ENCODE measurements at regions of chr10 and their contacts with region 1.

Region 1: DNA sequence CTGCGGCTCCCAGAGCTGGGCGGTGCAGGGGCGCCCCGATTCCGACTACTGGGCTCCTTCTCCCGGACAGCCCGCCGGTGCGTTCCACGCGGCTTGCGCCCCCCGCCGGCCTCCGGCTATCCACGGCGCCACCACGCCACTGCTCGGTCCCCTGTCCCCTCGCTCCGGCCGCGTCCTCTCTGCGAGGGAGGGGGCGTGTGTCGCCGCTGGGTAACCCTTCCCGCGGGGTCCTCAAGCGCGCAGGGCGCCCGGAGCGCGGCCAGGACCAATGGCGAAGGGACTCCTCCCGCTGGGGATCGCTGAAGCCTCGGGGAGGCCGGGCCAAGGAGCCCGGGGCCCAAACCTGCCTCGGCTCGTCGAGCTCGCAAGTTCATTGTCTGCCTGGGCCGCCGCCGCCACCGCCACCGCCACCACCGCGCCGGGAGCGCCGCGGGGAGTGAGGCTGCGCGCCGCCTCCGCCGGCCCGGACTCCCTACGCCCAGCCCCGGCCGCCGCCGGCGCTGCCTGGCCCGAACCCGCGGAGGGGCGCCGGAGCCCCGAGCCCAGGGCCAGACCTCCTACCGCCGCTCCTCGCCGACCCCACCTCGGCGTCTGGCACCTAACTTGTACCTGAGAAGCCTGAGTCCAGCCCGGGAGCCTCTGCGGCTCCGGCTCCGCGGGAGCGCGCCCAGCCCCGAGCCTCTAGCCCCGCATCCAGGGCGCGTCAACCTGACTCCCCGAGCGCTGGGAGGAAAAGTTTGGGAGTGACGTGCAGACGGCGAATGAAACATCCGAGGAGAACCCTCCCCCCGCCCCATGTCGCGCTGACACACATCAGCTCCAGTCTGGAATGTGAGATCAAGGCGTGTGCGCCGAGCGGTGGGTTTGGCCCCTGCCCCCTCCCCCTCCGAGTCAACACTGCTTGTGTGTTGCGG is at the start of gene CHST15:
- DNase-seq: peak; percentile 12
- H3K4me3 Mint-ChIP-seq: peak within 1 kb of the TSS; percentile 58
- H3K27ac Mint-ChIP-seq: no peak within 1 kb of the TSS
- H3K4me1 Mint-ChIP-seq: peaks cover 2% of the 10 kb centered on the region
- H3K27me3 Mint-ChIP-seq: peaks cover 55% of the 10 kb centered on the region
- total RNA-seq, gene CHST15: 0.47 to 0.50 TPM

Region 2: GRCh38 chr10:124221356-124222317 is 128.5 kb after region 1 on chr10:
- CTCF ChIA-PET with region 1: no interaction called
- intact Hi-C with region 1: loop called (anchors 10 kb)
- DNase-seq: no peak
- H3K4me3 Mint-ChIP-seq: no peak overlapping the region
- H3K27ac Mint-ChIP-seq: no peak overlapping the region
- H3K4me1 Mint-ChIP-seq: no peaks in the 10 kb centered on the region
- H3K27me3 Mint-ChIP-seq: no peaks in the 10 kb centered on the region

Measured in activated naive CD4-positive, alpha-beta T cell treated with anti-CD3 and anti-CD28 coated beads for 36 hours (primary cell).